CD8-positive, alpha-beta T cell (primary cell): ENCODE measurements at regions of chr2 and their contacts with region 1.

Region 1: DNA sequence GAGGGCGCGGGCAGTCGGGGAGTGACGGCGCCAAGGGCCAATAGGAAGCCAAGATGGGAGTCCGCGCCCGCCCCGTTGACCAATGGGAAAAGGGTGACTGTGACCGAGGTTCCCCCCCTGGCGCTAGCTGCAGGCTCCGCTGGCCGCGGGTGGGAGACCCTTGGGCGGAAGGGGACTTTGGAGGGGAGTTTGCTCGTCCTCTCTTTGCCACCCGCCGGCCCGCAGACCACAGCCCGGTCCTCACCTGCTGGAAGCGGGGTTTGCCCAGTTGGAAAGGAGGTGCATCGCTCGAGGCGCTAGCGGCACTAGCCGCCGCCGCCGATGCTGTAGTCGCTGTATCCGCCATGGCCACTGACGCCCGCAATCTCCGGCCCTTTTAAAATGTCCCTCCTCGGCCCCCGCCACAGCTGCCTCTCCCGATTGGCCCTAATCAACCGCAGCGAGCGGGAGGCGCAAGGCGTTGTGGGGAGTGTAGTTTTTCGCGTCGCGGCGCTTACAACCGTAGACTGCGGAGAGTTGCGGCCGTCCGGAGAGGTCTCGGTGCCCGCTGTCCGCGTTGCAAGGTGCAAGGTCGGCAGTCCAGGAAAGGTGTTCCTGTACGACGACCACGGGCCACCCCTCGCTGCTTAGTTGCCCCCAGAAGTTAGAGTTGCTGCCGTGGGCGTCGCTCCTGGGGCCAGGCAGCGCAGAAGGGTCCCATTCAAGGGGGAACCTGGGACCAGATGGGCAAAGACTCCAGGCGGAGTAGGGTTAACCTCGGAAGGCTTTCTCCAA is at the start of gene SFXN5:
- DNase-seq: peak; percentile 89 to 98 (median 95)
- ATAC-seq: peak; percentile 82
- H3K4me3 ChIP-seq: peak within 1 kb of the TSS; percentile 94 to 95
- H3K4me3 Mint-ChIP-seq: peak within 1 kb of the TSS; percentile 96
- H3K27ac ChIP-seq: peak within 1 kb of the TSS; percentile 73 to 86
- H3K27ac Mint-ChIP-seq: peak within 1 kb of the TSS; percentile 92
- H3K4me1 ChIP-seq: peaks cover 13% of the 10 kb centered on the region
- H3K4me1 Mint-ChIP-seq: peaks cover 41% of the 10 kb centered on the region
- H3K27me3 ChIP-seq: no peaks in the 10 kb centered on the region
- H3K27me3 Mint-ChIP-seq: no peaks in the 10 kb centered on the region
- CTCF ChIP-seq: no peak
- total RNA-seq, gene SFXN5: 6.1 to 9.3 TPM

Region 2: GRCh38 chr2:72825241-72826155 is 246.0 kb before region 1 on chr2 and contains the start of gene EXOC6B:
- CTCF ChIA-PET with region 1: no interaction called
- POLR2A ChIA-PET with region 1: no interaction called
- intact Hi-C with region 1: loop called (anchors 2 to 5 kb)
- DNase-seq: peak; percentile 67 to 91 (median 89)
- ATAC-seq: peak; percentile 89
- H3K4me3 ChIP-seq: peak within 1 kb of the TSS; percentile 70 to 88
- H3K4me3 Mint-ChIP-seq: peak within 1 kb of the TSS; percentile 98
- H3K27ac ChIP-seq: peak within 1 kb of the TSS; percentile 31 to 65
- H3K27ac Mint-ChIP-seq: peak within 1 kb of the TSS; percentile 96
- H3K4me1 ChIP-seq: peaks cover 20% of the 10 kb centered on the region
- H3K4me1 Mint-ChIP-seq: peaks cover 44% of the 10 kb centered on the region
- H3K27me3 ChIP-seq: no peaks in the 10 kb centered on the region
- H3K27me3 Mint-ChIP-seq: peaks cover 11% of the 10 kb centered on the region
- CTCF ChIP-seq: no peak
- total RNA-seq, gene EXOC6B: 13.1 to 14.9 TPM

Region 3: GRCh38 chr2:72993147-72993932 is 78.2 kb before region 1 on chr2:
- CTCF ChIA-PET with region 1: interaction called, 5 read pairs
- POLR2A ChIA-PET with region 1: no interaction called
- intact Hi-C with region 1: loop called (anchors 1 to 5 kb)
- DNase-seq: peak in 8 of 9 experiments; percentile 7 to 72 (median 54)
- ATAC-seq: peak; percentile 46
- H3K4me3 ChIP-seq: no peak overlapping the region
- H3K4me3 Mint-ChIP-seq: no peak overlapping the region
- H3K27ac ChIP-seq: no peak overlapping the region
- H3K27ac Mint-ChIP-seq: no peak overlapping the region
- H3K4me1 ChIP-seq: no peaks in the 10 kb centered on the region
- H3K4me1 Mint-ChIP-seq: no peaks in the 10 kb centered on the region
- H3K27me3 ChIP-seq: no peaks in the 10 kb centered on the region
- H3K27me3 Mint-ChIP-seq: no peaks in the 10 kb centered on the region
- CTCF ChIP-seq: peak; percentile 83

Region 4: DNA sequence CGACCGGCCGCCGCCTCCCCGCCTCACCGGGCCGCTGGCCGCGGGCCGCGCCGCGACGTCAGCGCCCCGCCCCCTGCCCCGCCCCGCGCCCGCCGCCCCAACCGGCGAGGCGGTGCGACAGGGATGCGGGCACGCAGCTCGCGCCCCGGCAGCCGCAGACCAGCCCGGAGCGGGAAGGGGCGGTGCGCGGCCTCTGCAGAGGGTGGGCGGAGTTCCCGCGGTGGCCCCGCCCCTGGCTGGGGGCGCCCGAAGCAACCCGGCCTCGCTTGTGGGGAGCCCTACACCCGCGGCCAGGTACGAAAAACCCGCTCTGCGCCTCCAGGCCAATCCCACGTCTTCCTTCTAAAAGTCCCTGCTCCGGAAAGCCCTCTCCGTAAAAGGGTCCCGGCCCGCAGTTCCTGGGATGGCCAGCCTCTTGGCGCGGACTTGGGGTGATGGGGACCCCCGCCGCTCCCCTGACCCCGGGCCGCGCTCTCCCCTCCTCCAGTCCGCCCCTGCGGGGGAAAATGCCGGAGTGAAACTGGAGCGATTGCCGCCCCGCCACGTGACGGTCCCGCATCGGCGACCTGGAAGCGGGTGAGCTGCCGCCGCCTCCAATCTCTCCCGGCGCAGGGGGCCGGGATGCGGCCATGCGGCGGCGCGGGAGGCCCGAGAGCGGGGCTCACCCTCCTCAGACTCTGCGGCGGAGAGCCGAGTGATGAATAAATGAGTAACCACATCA is 41.5 kb after region 1 on chr2 and contains the start of gene RAB11FIP5:
- CTCF ChIA-PET with region 1: no interaction called
- POLR2A ChIA-PET with region 1: no interaction called
- intact Hi-C with region 1: loop called (anchors 1 kb)
- DNase-seq: peak; percentile 43 to 90 (median 73)
- ATAC-seq: peak; percentile 90
- H3K4me3 ChIP-seq: peak within 1 kb of the TSS; percentile 68 to 70
- H3K4me3 Mint-ChIP-seq: peak within 1 kb of the TSS; percentile 82
- H3K27ac ChIP-seq: peak within 1 kb of the TSS; percentile 32 to 37
- H3K27ac Mint-ChIP-seq: no peak within 1 kb of the TSS
- H3K4me1 ChIP-seq: peaks cover 15% of the 10 kb centered on the region
- H3K4me1 Mint-ChIP-seq: peaks cover 18% of the 10 kb centered on the region
- H3K27me3 ChIP-seq: peaks cover 0 to 3% of the 10 kb centered on the region in 2 experiments
- H3K27me3 Mint-ChIP-seq: no peaks in the 10 kb centered on the region
- CTCF ChIP-seq: no peak
- total RNA-seq, gene RAB11FIP5: 4.7 to 10.7 TPM

Region 5: DNA sequence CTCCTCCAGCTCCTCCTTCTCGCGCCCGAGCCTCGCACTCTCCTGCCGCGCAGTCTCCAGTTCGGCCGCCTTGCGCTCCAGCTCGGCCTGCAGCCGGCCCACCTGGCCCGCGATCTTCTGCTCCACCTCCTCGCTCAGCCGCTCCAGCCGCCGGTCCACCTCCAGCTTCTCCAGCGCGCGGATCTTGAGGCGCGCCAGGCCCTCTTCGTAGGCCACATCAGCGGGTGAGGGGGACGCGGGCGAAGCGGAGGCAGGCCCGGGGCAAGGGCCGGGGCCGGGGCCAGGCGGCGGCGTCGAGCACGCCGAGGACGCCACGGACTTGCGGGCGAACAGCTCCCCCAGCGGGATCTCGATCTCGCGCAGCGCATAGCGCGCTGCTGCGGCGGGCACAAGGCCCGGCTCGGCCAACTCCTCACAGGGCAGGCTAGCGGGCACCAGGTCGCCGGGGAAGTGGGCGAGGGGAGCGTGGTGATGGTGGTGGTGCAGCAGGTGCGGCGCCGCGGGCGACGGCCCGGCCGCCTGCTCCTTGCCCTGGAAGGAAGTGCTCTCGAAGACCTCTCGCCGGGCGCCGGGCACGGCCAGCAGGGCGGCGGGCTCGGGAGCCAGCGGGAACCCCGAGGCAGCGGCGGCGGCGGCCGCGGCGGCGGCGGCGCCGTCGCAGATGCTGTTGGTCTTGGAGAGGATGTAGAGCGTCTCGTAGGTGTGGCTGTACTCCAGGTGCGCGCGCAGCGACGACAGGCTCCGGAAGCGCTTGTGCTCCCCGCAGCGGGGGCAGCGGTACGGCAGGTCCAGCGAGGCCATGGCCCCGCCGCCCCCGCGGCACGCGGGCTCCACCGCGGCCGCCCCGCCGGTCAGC is 197.5 kb after region 1 on chr2:
- CTCF ChIA-PET with region 1: no interaction called
- POLR2A ChIA-PET with region 1: no interaction called
- intact Hi-C with region 1: loop called in 1 of 2 experiments (anchors 1 kb)
- DNase-seq: peak; percentile 52 to 90 (median 81)
- ATAC-seq: peak; percentile 98
- H3K4me3 ChIP-seq: peak overlapping the region; percentile 42 to 52
- H3K4me3 Mint-ChIP-seq: peak overlapping the region; percentile 70
- H3K27ac ChIP-seq: peak overlapping the region in 1 of 2 experiments; percentile 37
- H3K27ac Mint-ChIP-seq: no peak overlapping the region
- H3K4me1 ChIP-seq: peaks cover 12% of the 10 kb centered on the region
- H3K4me1 Mint-ChIP-seq: peaks cover 29% of the 10 kb centered on the region
- H3K27me3 ChIP-seq: no peaks in the 10 kb centered on the region
- H3K27me3 Mint-ChIP-seq: no peaks in the 10 kb centered on the region
- CTCF ChIP-seq: peak; percentile 21

Region 6: DNA sequence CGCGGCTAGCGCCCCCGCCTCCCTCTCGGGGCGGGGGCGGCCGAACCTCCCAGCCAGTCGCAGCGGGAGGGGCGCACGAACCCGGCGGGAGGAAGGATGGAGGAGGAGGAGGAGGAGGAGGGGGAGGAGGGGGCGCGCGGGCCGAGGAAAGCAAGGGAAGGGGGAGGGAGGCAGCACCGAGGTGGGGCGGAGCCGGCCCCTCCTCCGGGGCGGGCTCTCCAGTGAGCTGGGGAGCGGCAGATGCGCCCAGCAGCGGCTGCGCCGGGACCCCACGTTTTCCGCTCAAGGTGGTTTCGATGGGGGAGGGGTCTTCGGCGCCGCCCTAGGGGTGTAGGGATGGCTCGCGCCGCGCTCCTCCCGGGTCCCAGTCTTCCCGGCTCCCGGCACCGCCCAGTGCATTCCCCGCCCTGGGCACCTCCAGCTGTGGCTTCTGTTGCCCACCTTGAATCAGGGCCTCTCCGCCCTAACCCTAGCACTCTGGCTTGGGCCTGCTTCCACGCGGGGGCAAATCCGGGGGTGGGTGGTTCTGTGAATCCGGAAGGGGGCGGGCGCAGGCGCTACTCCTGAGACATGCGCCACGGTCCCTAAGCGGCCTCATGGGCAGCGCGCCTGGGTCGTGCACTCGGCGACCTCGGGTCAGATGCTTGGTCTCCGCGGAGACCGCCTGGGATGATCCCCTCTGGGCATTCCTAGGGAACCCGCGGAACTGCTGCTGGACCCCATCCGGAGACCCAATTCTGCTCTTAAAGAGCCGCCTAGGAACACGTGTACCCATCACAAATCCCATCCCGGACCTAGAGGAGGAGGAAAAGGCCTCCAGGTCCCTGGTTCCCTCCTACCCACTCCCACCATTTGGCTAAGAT is 213.0 kb after region 1 on chr2 and contains the start of gene FBXO41:
- CTCF ChIA-PET with region 1: no interaction called
- POLR2A ChIA-PET with region 1: no interaction called
- intact Hi-C with region 1: loop called in 1 of 2 experiments (anchors 1 kb)
- DNase-seq: peak; percentile 26 to 87 (median 68)
- ATAC-seq: peak; percentile 84
- H3K4me3 ChIP-seq: peak within 1 kb of the TSS; percentile 77 to 81
- H3K4me3 Mint-ChIP-seq: peak within 1 kb of the TSS; percentile 91
- H3K27ac ChIP-seq: peak within 1 kb of the TSS; percentile 61 to 74
- H3K27ac Mint-ChIP-seq: peak within 1 kb of the TSS; percentile 75
- H3K4me1 ChIP-seq: peaks cover 20% of the 10 kb centered on the region
- H3K4me1 Mint-ChIP-seq: peaks cover 24% of the 10 kb centered on the region
- H3K27me3 ChIP-seq: no peaks in the 10 kb centered on the region
- H3K27me3 Mint-ChIP-seq: peaks cover 8% of the 10 kb centered on the region
- CTCF ChIP-seq: no peak
- total RNA-seq, gene FBXO41: 22.1 to 23.6 TPM

Region 7: GRCh38 chr2:73293534-73294171 is 222.1 kb after region 1 on chr2 and contains the start of gene EGR4:
- CTCF ChIA-PET with region 1: interaction called, 3 read pairs
- POLR2A ChIA-PET with region 1: no interaction called
- intact Hi-C with region 1: loop called in 1 of 2 experiments (anchors 5 kb)
- DNase-seq: peak; percentile 74 to 96 (median 84)
- ATAC-seq: peak; percentile 92
- H3K4me3 ChIP-seq: peak within 1 kb of the TSS; percentile 51 to 73
- H3K4me3 Mint-ChIP-seq: peak within 1 kb of the TSS; percentile 78
- H3K27ac ChIP-seq: no peak within 1 kb of the TSS
- H3K27ac Mint-ChIP-seq: no peak within 1 kb of the TSS
- H3K4me1 ChIP-seq: peaks cover 26% of the 10 kb centered on the region
- H3K4me1 Mint-ChIP-seq: peaks cover 14% of the 10 kb centered on the region
- H3K27me3 ChIP-seq: peaks cover 35 to 37% of the 10 kb centered on the region in 2 experiments
- H3K27me3 Mint-ChIP-seq: peaks cover 62% of the 10 kb centered on the region
- CTCF ChIP-seq: no peak
- total RNA-seq, gene EGR4: 0.14 to 0.22 TPM

Region 8: DNA sequence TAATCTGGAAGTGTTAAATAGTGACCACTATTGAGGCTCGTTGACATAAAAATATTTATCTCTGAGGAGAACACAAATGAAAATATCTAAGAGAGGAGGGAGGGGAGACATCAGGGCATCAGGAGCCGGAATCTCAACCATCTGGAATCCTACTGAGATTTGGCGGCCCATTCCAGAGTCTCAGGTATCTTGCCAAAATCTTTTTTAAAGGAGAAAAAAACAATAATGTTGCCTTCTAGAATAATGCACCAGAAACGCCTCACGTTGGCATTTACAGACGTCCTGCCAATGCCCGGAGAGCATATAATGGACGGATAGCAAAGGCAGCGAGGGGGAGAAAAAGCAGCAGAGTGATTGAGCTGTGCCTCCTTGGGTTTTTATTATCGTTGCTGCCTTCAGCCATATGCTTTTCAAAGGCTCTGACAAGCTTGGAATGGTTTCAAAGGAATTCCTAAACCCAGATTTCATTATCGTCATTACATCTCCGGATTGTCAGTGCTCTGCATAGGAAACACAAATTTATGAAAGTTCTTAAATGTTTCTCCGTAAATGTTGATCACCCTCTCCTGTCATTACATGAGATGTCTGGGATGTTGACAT is 252.7 kb after region 1 on chr2:
- CTCF ChIA-PET with region 1: no interaction called
- POLR2A ChIA-PET with region 1: no interaction called
- intact Hi-C with region 1: no loop called
- DNase-seq: no peak
- ATAC-seq: no peak
- H3K4me3 ChIP-seq: no peak overlapping the region
- H3K4me3 Mint-ChIP-seq: no peak overlapping the region
- H3K27ac ChIP-seq: no peak overlapping the region
- H3K27ac Mint-ChIP-seq: no peak overlapping the region
- H3K4me1 ChIP-seq: no peaks in the 10 kb centered on the region
- H3K4me1 Mint-ChIP-seq: no peaks in the 10 kb centered on the region
- H3K27me3 ChIP-seq: peaks cover 0 to 3% of the 10 kb centered on the region in 2 experiments
- H3K27me3 Mint-ChIP-seq: peaks cover 27% of the 10 kb centered on the region
- CTCF ChIP-seq: no peak